CD4-positive, alpha-beta memory T cell (primary cell): ENCODE measurements at regions of chr2 and their contacts with region 1.

Region 1: GRCh38 chr2:160252278-160252887 is 52.3 kb upstream of the ITGB6 start:
- DNase-seq: peak in 1 of 5 donors; percentile 17
- H3K4me3 ChIP-seq: no peak overlapping the region
- H3K4me3 Mint-ChIP-seq: no peak overlapping the region
- H3K27ac ChIP-seq: no peak overlapping the region
- H3K27ac Mint-ChIP-seq: no peak overlapping the region
- H3K4me1 ChIP-seq: no peaks in the 10 kb centered on the region
- H3K4me1 Mint-ChIP-seq: peaks cover 0 to 5% (median 0%) of the 10 kb centered on the region in 4 donors
- H3K27me3 ChIP-seq: no peaks in the 10 kb centered on the region
- H3K27me3 Mint-ChIP-seq: no peaks in the 10 kb centered on the region

Region 2: DNA sequence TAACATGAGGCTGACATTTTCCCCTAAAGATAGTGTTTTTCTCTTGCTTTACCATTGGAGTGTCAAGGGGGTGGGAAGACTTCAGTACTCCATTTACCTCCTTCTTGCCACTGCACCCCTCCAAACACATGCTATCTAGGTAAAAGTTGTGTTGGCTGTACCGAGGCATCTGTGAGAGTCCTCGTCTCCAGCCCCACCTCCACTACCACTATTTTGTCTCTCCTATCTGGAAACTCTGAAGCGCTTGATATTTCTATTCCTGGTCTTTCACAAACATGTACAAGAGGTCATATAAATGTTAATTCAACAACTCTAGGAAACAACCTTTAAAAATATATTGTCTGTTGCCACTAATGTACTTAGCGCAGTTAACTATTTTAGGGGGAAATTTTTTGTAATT is 1663.1 kb before region 1 on chr2:
- CTCF ChIA-PET with region 1: no interaction called
- POLR2A ChIA-PET with region 1: no interaction called
- intact Hi-C with region 1: no loop called
- DNase-seq: no peak
- H3K4me3 ChIP-seq: no peak overlapping the region
- H3K4me3 Mint-ChIP-seq: no peak overlapping the region
- H3K27ac ChIP-seq: no peak overlapping the region
- H3K27ac Mint-ChIP-seq: no peak overlapping the region
- H3K4me1 ChIP-seq: no peaks in the 10 kb centered on the region
- H3K4me1 Mint-ChIP-seq: no peaks in the 10 kb centered on the region
- H3K27me3 ChIP-seq: no peaks in the 10 kb centered on the region
- H3K27me3 Mint-ChIP-seq: no peaks in the 10 kb centered on the region

Region 3: GRCh38 chr2:160087854-160088745 is 164.3 kb before region 1 on chr2:
- CTCF ChIA-PET with region 1: no interaction called
- POLR2A ChIA-PET with region 1: no interaction called
- intact Hi-C with region 1: no loop called
- DNase-seq: no peak
- H3K4me3 ChIP-seq: no peak overlapping the region
- H3K4me3 Mint-ChIP-seq: no peak overlapping the region
- H3K27ac ChIP-seq: no peak overlapping the region
- H3K27ac Mint-ChIP-seq: no peak overlapping the region
- H3K4me1 ChIP-seq: no peaks in the 10 kb centered on the region
- H3K4me1 Mint-ChIP-seq: no peaks in the 10 kb centered on the region
- H3K27me3 ChIP-seq: no peaks in the 10 kb centered on the region
- H3K27me3 Mint-ChIP-seq: peaks cover 1 to 5% of the 10 kb centered on the region in 2 donors

Region 4: DNA sequence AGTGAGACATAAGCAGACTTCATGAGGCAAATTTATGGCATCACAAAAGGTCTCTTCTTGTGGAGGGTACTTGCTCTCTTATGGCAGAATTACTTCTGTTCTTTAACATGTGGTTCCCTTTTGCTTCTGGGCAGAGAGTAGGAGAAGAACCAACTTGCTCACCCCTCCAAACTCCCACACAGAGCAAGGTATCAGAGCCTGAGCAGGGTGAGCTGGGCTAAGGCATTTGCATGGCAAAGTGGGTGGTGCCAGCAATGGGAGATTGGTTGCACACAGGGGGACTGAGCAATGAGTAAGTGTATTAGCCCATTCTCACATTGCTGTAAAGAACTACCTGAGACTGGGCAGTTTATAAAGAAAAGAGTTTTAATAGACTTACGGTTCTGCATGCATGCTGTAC is 11.9 kb after region 1 on chr2:
- CTCF ChIA-PET with region 1: interaction called, 25 read pairs
- POLR2A ChIA-PET with region 1: interaction called, 3 read pairs
- intact Hi-C with region 1: no loop called
- DNase-seq: no peak
- H3K4me3 ChIP-seq: no peak overlapping the region
- H3K4me3 Mint-ChIP-seq: peak overlapping the region in 1 of 8 donors; percentile 27
- H3K27ac ChIP-seq: no peak overlapping the region
- H3K27ac Mint-ChIP-seq: peak overlapping the region in 2 of 7 donors; percentile 32 to 43
- H3K4me1 ChIP-seq: peaks cover 17% of the 10 kb centered on the region
- H3K4me1 Mint-ChIP-seq: peaks cover 16 to 40% (median 26%) of the 10 kb centered on the region in 4 donors
- H3K27me3 ChIP-seq: no peaks in the 10 kb centered on the region
- H3K27me3 Mint-ChIP-seq: no peaks in the 10 kb centered on the region

Region 5: DNA sequence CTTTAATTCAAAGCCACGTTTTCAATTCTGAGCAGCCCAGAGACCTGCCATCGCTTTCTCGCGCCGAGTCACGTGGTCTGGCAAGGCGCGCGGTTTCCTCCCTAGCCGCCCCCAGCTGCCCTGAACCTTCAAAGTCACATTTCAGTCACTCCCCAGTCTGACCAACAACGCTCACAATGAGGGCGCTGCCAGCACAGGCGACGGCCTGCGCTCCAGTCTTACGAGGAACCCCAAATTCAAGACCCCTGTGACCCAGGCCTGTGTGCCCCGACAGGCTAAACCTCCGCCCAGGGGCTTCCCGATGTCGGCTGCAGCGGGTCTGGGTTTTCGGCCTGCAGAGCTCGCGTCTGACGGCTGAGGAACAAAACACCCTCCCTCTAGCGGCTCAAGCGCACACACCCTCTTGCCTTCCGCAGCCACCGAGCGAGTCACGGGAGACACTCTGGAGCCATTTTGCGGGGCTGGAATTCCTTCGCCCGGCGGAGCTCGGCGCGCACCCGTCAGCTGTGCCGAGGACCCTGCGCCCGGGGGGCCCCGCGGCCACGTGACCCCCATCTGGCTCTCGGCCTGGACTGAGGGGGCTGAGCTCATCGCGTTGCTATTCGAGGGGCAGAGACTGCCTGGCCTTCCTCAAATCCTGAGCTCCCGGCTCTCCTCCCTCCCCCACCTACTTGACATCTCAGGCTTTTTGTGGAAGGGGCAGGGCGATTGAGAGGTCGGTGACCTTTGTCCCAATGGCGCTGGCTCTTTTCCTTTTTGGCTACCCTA is 17.6 kb after region 1 on chr2:
- CTCF ChIA-PET with region 1: interaction called, 25 read pairs
- POLR2A ChIA-PET with region 1: interaction called, 3 read pairs
- intact Hi-C with region 1: no loop called
- DNase-seq: peak; percentile 64 to 75 (median 69)
- H3K4me3 ChIP-seq: peak overlapping the region; percentile 30 to 59
- H3K4me3 Mint-ChIP-seq: peak overlapping the region; percentile 81 to 90 (median 87)
- H3K27ac ChIP-seq: peak overlapping the region; percentile 64
- H3K27ac Mint-ChIP-seq: peak overlapping the region; percentile 91 to 97 (median 94)
- H3K4me1 ChIP-seq: peaks cover 29% of the 10 kb centered on the region
- H3K4me1 Mint-ChIP-seq: peaks cover 20 to 48% (median 32%) of the 10 kb centered on the region in 4 donors
- H3K27me3 ChIP-seq: no peaks in the 10 kb centered on the region
- H3K27me3 Mint-ChIP-seq: no peaks in the 10 kb centered on the region

Region 6: GRCh38 chr2:160918906-160919503 is 666.6 kb after region 1 on chr2:
- CTCF ChIA-PET with region 1: interaction called, 7 read pairs
- POLR2A ChIA-PET with region 1: no interaction called
- intact Hi-C with region 1: loop called (anchors 1 kb)
- DNase-seq: peak in 3 of 5 donors; percentile 6 to 18 (median 13)
- H3K4me3 ChIP-seq: no peak overlapping the region
- H3K4me3 Mint-ChIP-seq: no peak overlapping the region
- H3K27ac ChIP-seq: no peak overlapping the region
- H3K27ac Mint-ChIP-seq: no peak overlapping the region
- H3K4me1 ChIP-seq: no peaks in the 10 kb centered on the region
- H3K4me1 Mint-ChIP-seq: no peaks in the 10 kb centered on the region
- H3K27me3 ChIP-seq: no peaks in the 10 kb centered on the region
- H3K27me3 Mint-ChIP-seq: no peaks in the 10 kb centered on the region

Region 7: DNA sequence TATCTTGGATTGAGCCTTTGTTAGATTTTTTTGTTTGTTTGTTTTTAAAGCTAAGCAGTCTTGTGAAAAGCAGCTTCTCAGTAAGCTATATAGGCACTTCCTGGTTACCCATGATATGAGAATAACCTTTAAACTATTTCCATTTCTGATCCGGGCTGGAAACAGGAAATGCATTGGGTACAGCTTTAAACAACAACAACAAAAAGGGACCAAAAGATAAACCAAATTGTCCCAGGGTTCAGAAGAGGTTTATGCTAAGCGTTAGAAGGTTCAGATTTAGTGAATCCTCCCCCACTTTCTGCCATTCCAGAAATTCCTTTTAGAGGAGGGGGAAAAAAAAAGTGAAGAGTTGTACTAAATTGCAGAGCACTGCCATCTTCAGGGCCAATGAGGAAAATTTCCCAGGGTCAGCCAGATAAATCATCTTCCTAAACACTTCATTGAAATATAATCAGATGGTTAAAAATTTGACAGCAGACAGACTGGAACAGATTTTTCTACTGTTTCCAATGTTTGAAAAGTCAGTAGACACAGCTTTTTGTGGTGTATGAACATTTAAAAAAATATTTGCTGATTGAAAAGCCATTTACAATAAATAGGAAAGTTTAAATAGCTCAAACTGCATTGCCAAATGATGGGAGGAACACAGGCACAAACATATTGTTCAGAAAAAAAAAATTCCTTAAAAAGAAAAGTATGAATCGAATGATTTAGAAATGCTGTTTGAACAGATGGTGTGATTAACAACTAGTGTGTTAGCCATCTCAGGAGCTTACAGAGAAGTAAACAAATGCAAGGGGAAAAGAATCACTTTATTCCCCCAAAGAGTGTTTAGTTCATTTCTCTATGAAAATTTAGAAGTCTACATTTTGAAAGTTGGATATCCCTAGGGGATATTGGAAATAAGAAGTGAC is 717.9 kb after region 1 on chr2:
- CTCF ChIA-PET with region 1: interaction called, 24 read pairs
- POLR2A ChIA-PET with region 1: no interaction called
- intact Hi-C with region 1: loop called (anchors 1 kb)
- DNase-seq: peak in 4 of 5 donors; percentile 15 to 26 (median 20)
- H3K4me3 ChIP-seq: no peak overlapping the region
- H3K4me3 Mint-ChIP-seq: peak overlapping the region in 1 of 8 donors; percentile 26
- H3K27ac ChIP-seq: no peak overlapping the region
- H3K27ac Mint-ChIP-seq: peak overlapping the region in 2 of 7 donors; percentile 7 to 10
- H3K4me1 ChIP-seq: no peaks in the 10 kb centered on the region
- H3K4me1 Mint-ChIP-seq: peaks cover 1 to 4% (median 3%) of the 10 kb centered on the region in 4 donors
- H3K27me3 ChIP-seq: no peaks in the 10 kb centered on the region
- H3K27me3 Mint-ChIP-seq: peaks cover 0 to 1% of the 10 kb centered on the region in 2 donors